Adrenal gland (tissue), 19 donors: ENCODE measurements at regions of chr1 and their contacts with region 1.

Region 1: GRCh38 chr1:112390775-112391602 is 5.0 kb upstream of the CTTNBP2NL start:
- DNase-seq: peak; percentile 88 to 97 (median 91)
- H3K4me3 ChIP-seq: peak overlapping the region in 2 of 4 donors; percentile 26 to 34
- H3K27ac ChIP-seq: peak overlapping the region in 4 of 5 donors; percentile 1 to 65 (median 60)
- H3K4me1 ChIP-seq: peaks cover 20 to 33% of the 10 kb centered on the region in 2 donors
- H3K27me3 ChIP-seq: no peaks in the 10 kb centered on the region
- CTCF ChIP-seq: peak; percentile 88 to 97 (median 95)
- POLR2A ChIP-seq: no peak

Region 2: GRCh38 chr1:112209488-112209887 is 181.5 kb before region 1 on chr1:
- intact Hi-C with region 1: no loop called
- DNase-seq: no peak
- H3K4me3 ChIP-seq: no peak overlapping the region
- H3K27ac ChIP-seq: no peak overlapping the region
- H3K4me1 ChIP-seq: no peaks in the 10 kb centered on the region
- H3K27me3 ChIP-seq: no peaks in the 10 kb centered on the region
- CTCF ChIP-seq: no peak
- POLR2A ChIP-seq: no peak

Region 3: DNA sequence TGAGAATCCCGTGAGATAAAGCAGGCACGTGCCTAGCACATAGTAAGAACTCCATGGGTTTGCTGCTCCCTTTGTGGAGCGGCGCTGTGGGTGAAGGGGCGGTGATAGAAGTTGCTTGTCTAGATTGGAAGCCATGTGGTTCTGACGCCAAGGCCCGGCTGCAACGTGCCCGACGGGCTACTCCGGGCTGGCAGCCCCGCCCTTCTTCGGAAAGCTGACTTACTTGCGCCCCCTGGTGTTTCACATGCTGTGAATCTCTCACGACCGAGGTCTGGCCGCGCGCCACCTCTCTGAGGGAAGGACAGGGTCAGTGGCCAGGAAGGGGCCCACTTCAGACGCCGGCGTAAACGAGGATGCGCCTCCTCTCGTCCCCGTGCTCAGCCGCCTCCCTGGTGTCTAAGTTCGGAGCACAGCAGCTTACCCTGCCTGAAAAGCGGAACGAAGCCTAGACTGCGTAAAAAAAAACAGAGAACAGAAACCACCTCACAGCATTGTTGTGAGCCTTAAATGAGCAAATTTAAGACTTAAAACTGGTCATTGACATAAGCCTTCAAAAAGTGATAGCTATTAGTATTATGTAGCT is 75.2 kb after region 1 on chr1:
- intact Hi-C with region 1: loop called (anchors 2 to 5 kb)
- DNase-seq: peak; percentile 95 to 98 (median 97)
- H3K4me3 ChIP-seq: peak overlapping the region in 2 of 4 donors; percentile 4 to 44
- H3K27ac ChIP-seq: peak overlapping the region in 3 of 5 donors; percentile 25 to 66 (median 64)
- H3K4me1 ChIP-seq: peaks cover 0 to 13% of the 10 kb centered on the region in 2 donors
- H3K27me3 ChIP-seq: no peaks in the 10 kb centered on the region
- CTCF ChIP-seq: peak; percentile 83 to 97 (median 94)
- POLR2A ChIP-seq: no peak

Region 4: GRCh38 chr1:112614460-112615065 is 223.6 kb after region 1 on chr1:
- intact Hi-C with region 1: loop called (anchors 5 to 10 kb)
- DNase-seq: peak in 1 of 7 donors; percentile 29
- H3K4me3 ChIP-seq: no peak overlapping the region
- H3K27ac ChIP-seq: peak overlapping the region in 1 of 5 donors; percentile 13
- H3K4me1 ChIP-seq: peaks cover 11 to 16% of the 10 kb centered on the region in 2 donors
- H3K27me3 ChIP-seq: no peaks in the 10 kb centered on the region
- CTCF ChIP-seq: peak; percentile 17 to 65 (median 60)
- POLR2A ChIP-seq: no peak

Region 5: GRCh38 chr1:112619520-112620376 is 228.8 kb after region 1 on chr1 and contains the start of gene CAPZA1:
- intact Hi-C with region 1: loop called (anchors 5 to 10 kb)
- DNase-seq: peak; percentile 89 to 96 (median 92)
- H3K4me3 ChIP-seq: peak within 1 kb of the TSS; percentile 69 to 93 (median 88)
- H3K27ac ChIP-seq: peak within 1 kb of the TSS; percentile 95 to 99 (median 96)
- H3K4me1 ChIP-seq: peaks cover 17 to 51% of the 10 kb centered on the region in 2 donors
- H3K27me3 ChIP-seq: no peaks in the 10 kb centered on the region
- CTCF ChIP-seq: no peak
- POLR2A ChIP-seq: peak; percentile 71 to 81
- total RNA-seq, gene CAPZA1: 65.2 to 178 (median 96.5) TPM